ENCODE measurements at regions of chr1 and their contacts with region 1.

Region 1: DNA sequence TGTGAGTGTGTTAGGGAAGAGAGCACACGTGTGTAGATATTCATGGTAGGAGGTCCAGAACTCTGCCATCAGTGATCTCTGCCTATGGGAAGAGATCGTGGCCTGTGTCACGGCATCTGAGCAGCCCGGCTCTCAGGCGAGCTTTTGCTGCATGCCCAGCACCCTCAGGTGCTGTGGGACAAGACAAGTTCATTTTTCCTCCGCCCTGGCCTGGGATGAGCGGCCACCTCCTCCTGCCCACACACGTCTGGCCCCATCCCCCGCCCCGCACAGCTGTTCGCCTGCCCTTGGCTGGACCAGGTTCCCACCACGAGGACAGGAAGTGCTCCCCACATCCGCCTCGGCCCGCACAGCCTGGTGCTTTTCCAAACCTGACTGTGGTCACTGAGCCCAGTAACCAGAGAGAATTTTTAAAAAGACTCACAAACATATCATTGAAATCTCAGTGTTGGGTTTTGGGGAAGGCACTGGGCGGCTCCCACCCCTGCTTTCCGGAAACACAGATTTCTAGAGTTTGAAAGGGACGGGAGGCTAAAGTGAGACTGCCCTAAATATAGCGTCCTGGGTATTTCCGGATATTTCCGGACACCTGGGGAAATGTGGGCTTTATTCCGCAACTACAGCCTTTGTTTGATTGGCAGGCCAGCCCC is 18.0 kb downstream of the BMP8A start:
- DNase-seq: no peak
- ATAC-seq: 0 out of 3 replicates have a peak, but pooled peaks have one; percentile 5
- H3K4me3 ChIP-seq: no peak overlapping the region
- H3K27ac ChIP-seq: no peak overlapping the region
- H3K4me1 ChIP-seq: peaks cover 6 to 8% of the 10 kb centered on the region in 2 experiments; a peak in 2 of 5 replicates
- H3K27me3 ChIP-seq: no peaks in the 10 kb centered on the region
- CTCF ChIP-seq: no peak
- EP300 ChIP-seq: no peak
- POLR2A ChIP-seq: no peak
- RAD21 ChIP-seq: no peak

Region 2: DNA sequence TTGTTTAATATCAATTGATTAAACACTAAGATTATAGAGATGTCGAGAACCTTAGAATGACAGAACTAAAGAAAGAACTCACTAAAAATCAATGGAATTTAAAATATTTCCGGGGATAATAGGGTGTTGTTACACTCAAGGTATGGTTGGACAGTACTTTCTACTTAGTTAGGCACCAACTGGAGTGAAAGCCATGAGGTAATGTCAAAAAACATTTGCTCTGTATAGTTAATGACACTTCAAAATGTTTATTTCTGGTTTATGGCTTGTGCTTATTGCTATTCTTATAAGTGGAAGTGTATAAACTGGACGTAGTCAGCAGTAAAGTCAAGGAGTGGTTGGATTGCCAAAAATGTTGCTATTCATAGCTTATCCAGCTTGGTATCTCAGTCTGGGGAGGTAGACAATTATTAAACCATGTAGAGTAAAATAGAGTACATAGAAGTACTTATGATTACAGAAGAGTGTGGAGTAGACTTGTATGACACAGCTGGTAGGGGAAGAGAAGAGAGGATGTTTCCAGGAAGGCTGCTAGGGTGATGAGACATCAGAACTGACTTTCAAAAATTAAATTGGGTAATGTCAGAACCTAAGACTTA is 74.6 kb before region 1 on chr1:
- CTCF ChIA-PET with region 1: no interaction called
- POLR2A ChIA-PET with region 1: no interaction called
- in situ Hi-C with region 1: no loop called
- intact Hi-C with region 1: no loop called
- DNase-seq: no peak
- ATAC-seq: no peak
- H3K4me3 ChIP-seq: no peak overlapping the region
- H3K27ac ChIP-seq: no peak overlapping the region
- H3K4me1 ChIP-seq: no peaks in the 10 kb centered on the region
- H3K27me3 ChIP-seq: no peaks in the 10 kb centered on the region
- CTCF ChIP-seq: no peak
- EP300 ChIP-seq: no peak
- POLR2A ChIP-seq: no peak
- RAD21 ChIP-seq: no peak

Region 3: GRCh38 chr1:39653546-39654031 is 144.1 kb after region 1 on chr1:
- CTCF ChIA-PET with region 1: no interaction called
- POLR2A ChIA-PET with region 1: no interaction called
- in situ Hi-C with region 1: no loop called
- intact Hi-C with region 1: loop called (anchors 5 kb)
- DNase-seq: peak; percentile 73 to 87 (median 76)
- ATAC-seq: peak; percentile 81
- H3K4me3 ChIP-seq: no peak overlapping the region
- H3K27ac ChIP-seq: no peak overlapping the region
- H3K4me1 ChIP-seq: peaks cover 7% of the 10 kb centered on the region in 2 experiments; a peak in 2 of 5 replicates
- H3K27me3 ChIP-seq: peaks cover 3 to 18% of the 10 kb centered on the region in 2 experiments; a peak in 4 of 5 replicates
- CTCF ChIP-seq: peak; percentile 92 to 97 (median 95)
- EP300 ChIP-seq: no peak
- POLR2A ChIP-seq: no peak
- RAD21 ChIP-seq: peak; percentile 88 to 95

Region 4: GRCh38 chr1:39776400-39776713 is 266.9 kb after region 1 on chr1:
- CTCF ChIA-PET with region 1: no interaction called
- POLR2A ChIA-PET with region 1: no interaction called
- in situ Hi-C with region 1: loop called (anchors 10 kb)
- intact Hi-C with region 1: no loop called
- DNase-seq: no peak
- ATAC-seq: no peak
- H3K4me3 ChIP-seq: no peak overlapping the region
- H3K27ac ChIP-seq: no peak overlapping the region
- H3K4me1 ChIP-seq: peaks cover 4 to 8% of the 10 kb centered on the region in 2 experiments; a peak in 2 of 5 replicates
- H3K27me3 ChIP-seq: peaks cover 7 to 33% of the 10 kb centered on the region in 2 experiments; a peak in 3 of 5 replicates
- CTCF ChIP-seq: no peak
- EP300 ChIP-seq: no peak
- POLR2A ChIP-seq: no peak
- RAD21 ChIP-seq: no peak

Measured in K562 (cell line).